Mammary epithelial cell (primary cell): ENCODE measurements at regions of chr5 and their contacts with region 1.

Region 1: GRCh38 chr5:57298295-57298984 is 124.6 kb downstream of the GPBP1 start:
- DNase-seq: peak; percentile 73
- H3K4me3 ChIP-seq: no peak overlapping the region
- H3K27ac ChIP-seq: no peak overlapping the region
- H3K4me1 ChIP-seq: no peaks in the 10 kb centered on the region
- H3K27me3 ChIP-seq: no peaks in the 10 kb centered on the region
- CTCF ChIP-seq: peak; percentile 76 to 88

Region 2: DNA sequence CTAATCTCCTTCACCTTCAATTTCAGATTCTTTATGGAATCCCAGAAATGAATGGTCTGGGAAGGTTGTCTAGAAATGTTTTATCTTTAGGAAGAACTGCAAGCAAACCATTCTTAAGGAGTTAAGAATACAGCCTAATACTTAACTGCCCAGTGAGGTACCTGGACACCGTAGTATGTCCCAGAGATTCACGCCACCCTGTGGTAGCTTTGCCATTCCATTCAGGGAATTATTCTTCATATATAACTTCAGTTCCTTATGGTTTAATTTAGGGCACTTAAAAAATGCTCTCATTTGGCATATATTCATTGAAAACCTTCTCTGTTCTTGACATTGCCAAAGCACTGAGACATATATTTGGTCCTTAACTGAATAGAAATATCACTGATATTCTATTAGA is 134.4 kb after region 1 on chr5:
- CTCF ChIA-PET with region 1: no interaction called
- dilution Hi-C with region 1: no loop called
- in situ Hi-C with region 1: no loop called
- intact Hi-C with region 1: loop called (anchors 1 kb)
- DNase-seq: peak; percentile 20
- H3K4me3 ChIP-seq: no peak overlapping the region
- H3K27ac ChIP-seq: no peak overlapping the region
- H3K4me1 ChIP-seq: peaks cover 17% of the 10 kb centered on the region
- H3K27me3 ChIP-seq: peaks cover 9% of the 10 kb centered on the region
- CTCF ChIP-seq: peak; percentile 28 to 53

Region 3: DNA sequence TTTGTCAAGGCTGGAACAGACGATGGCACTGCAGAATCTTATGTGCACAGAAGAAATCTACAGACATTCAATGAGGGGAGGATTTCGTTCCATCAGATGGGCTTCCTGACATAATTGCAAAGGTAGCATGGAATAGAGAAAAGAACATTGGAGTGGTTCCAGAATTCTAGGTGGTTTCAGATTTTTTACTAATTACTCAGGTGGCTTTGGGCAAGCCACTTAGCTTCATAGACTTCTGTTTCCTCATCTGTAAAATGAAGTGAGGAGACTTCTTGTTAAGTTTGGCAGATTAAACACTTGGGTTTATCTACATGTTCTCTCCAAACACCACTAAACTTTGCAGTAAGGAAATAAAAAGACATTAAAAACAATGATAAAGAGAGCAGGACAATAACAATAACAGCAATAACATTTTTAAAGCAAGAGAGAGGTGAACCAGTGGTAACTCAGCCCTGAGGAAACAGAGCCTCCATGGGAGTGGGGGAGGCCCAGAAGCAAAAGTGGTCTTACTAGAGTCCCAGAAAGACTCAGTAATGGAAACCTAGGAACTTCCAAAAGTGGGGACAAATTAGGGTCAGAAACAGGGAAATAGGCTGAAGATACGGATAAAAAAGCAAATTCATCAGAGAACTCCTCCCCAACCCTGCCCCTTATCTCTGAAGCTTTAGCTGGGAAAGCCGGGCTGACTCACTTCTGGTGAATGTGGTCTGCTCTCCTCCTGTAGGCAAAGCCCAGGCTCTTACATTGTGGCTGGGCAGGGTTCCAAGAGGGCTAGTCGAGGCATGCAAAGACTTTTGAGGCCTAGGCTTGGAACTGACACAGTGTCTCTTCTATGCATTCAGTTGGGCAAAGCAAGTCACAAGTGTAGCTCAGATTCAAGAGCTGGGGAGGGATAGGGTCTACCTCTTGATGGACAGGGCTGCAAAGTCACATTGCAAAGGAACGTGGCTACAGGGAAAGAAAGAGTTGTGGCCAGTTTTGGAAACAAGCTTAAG is 196.0 kb after region 1 on chr5:
- CTCF ChIA-PET with region 1: interaction called, 4 read pairs
- dilution Hi-C with region 1: no loop called
- in situ Hi-C with region 1: no loop called
- intact Hi-C with region 1: loop called (anchors 1 kb)
- DNase-seq: peak; percentile 97
- H3K4me3 ChIP-seq: peak overlapping the region in 1 of 3 experiments; percentile 30
- H3K27ac ChIP-seq: peak overlapping the region; percentile 80
- H3K4me1 ChIP-seq: peaks cover 40% of the 10 kb centered on the region
- H3K27me3 ChIP-seq: no peaks in the 10 kb centered on the region
- CTCF ChIP-seq: no peak

Region 4: GRCh38 chr5:57499262-57500050 is 201.0 kb after region 1 on chr5:
- CTCF ChIA-PET with region 1: interaction called, 4 read pairs
- dilution Hi-C with region 1: no loop called
- in situ Hi-C with region 1: loop called in 1 of 2 experiments (anchors 5 kb)
- intact Hi-C with region 1: loop called (anchors 1 kb)
- DNase-seq: peak; percentile 63
- H3K4me3 ChIP-seq: peak overlapping the region in 2 of 3 experiments; percentile 36 to 39
- H3K27ac ChIP-seq: no peak overlapping the region
- H3K4me1 ChIP-seq: peaks cover 24% of the 10 kb centered on the region
- H3K27me3 ChIP-seq: no peaks in the 10 kb centered on the region
- CTCF ChIP-seq: peak; percentile 87 to 89

Region 5: DNA sequence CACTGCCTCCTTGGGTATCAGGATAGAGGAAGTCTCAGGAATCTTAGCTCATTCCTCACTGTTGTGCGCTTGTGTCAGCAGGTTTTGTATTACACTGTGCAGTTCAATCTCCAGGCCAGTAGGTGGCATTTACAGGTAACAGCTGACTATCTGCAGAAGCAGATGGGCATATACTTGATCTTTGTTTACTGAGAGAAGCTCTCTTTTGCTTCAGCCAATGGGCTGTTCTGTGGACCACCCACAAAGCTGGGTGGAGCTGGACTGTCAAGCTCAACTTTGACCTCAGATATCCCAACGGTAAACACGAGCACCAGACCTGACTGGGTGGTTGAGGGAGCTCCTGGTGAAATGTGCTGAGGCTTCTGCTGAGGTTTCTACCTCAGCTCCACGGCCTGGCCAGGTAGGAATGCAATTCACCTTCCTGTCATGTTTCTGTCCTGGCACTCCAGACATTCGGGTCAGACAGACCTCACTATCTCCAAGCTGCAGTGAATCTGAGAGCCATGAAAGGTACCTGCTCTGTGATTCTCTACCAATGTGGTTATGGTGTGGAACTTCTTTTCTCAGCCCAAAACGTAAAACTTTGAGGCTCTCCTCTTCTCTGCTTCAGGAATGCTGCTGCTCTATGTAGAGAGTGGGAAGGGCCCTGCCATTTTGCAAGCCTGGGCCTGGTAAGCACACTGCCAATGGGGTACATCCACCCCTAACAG is 352.1 kb after region 1 on chr5:
- CTCF ChIA-PET with region 1: interaction called, 6 read pairs
- dilution Hi-C with region 1: no loop called
- in situ Hi-C with region 1: no loop called
- intact Hi-C with region 1: loop called (anchors 1 kb)
- DNase-seq: peak; percentile 74
- H3K4me3 ChIP-seq: no peak overlapping the region
- H3K27ac ChIP-seq: no peak overlapping the region
- H3K4me1 ChIP-seq: peaks cover 5% of the 10 kb centered on the region
- H3K27me3 ChIP-seq: no peaks in the 10 kb centered on the region
- CTCF ChIP-seq: peak; percentile 91 to 93

Region 6: DNA sequence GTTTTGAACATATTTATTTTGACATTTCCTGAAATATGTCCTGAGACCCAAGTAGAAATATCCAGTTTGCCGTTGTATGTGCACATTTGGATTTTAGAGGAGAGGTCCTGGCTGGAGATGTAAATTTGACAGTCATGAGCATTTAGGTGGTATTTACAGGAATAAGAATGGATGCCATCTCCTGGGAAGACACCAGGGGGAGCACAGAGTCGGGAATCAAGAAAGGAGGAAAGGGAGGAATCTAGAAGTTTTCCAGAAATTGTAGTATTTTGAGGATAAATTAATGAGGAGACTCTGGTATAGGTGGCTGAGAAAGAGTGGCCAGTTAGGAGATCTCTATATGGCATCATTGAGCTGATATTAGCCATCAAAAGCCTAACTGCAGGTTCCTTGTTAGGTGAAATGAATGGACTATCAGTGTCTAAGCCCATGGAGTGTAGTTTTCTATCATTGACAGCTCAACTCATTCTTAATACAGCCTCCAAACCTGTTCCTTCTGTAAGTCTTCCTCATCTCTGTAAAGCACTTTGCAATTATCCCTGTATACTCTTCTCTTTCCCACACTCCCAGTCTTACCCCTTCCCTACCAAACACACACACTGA is 1200.0 kb after region 1 on chr5:
- CTCF ChIA-PET with region 1: interaction called, 11 read pairs
- dilution Hi-C with region 1: no loop called
- in situ Hi-C with region 1: no loop called
- intact Hi-C with region 1: no loop called
- DNase-seq: peak; percentile 2
- H3K4me3 ChIP-seq: no peak overlapping the region
- H3K27ac ChIP-seq: no peak overlapping the region
- H3K4me1 ChIP-seq: no peaks in the 10 kb centered on the region
- H3K27me3 ChIP-seq: no peaks in the 10 kb centered on the region
- CTCF ChIP-seq: peak; percentile 84 to 86

Region 7: DNA sequence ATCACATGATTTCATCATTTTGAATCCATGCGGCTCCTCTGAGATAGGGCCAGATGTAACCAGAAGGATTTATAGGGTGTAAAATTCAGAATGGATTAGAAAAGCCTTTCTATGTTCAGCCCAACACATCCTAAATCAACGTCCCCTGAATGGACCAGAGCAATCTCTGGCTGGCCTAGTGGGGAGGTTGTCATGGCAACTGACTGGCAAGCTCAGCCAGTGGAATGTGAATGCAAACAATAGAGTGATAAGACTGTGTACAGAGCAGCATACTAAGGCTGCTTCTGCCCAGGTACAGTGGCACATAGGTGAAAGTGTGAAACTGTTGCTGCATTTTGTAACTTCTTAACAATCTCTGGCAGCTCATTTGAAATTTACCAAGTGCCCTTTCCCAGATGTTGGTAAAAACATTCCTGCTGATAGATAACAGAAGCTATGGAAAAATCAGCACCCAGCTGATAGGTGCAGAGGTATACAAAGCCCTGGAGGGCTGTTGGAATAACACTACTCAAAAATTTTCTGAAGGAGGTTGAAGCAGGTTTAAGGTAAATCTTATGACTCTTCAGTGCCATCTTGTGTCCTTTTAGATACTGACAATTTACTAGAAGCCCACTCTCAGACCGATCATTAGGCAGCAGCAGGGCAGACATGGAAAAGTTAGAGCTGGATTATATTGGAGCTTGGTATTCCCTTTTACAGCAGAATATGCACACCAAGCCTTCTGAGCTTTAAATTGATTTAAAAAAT is 1551.7 kb after region 1 on chr5:
- CTCF ChIA-PET with region 1: no interaction called
- dilution Hi-C with region 1: no loop called
- in situ Hi-C with region 1: no loop called
- intact Hi-C with region 1: loop called (anchors 10 kb)
- DNase-seq: peak; percentile 9
- H3K4me3 ChIP-seq: no peak overlapping the region
- H3K27ac ChIP-seq: no peak overlapping the region
- H3K4me1 ChIP-seq: no peaks in the 10 kb centered on the region
- H3K27me3 ChIP-seq: peaks cover 4% of the 10 kb centered on the region
- CTCF ChIP-seq: peak; percentile 24 to 57